Gastrocnemius medialis (tissue), 4 donors: ENCODE measurements at regions of chr3 and their contacts with region 1.

Region 1: GRCh38 chr3:9649791-9650521 is 651 bp downstream of the MTMR14 start:
- DNase-seq: no peak
- ATAC-seq: peak; percentile 3
- H3K4me3 ChIP-seq: peak overlapping the region; percentile 89 to 98 (median 93)
- H3K27ac ChIP-seq: peak overlapping the region; percentile 89 to 96 (median 96)
- H3K4me1 ChIP-seq: peaks cover 40 to 41% of the 10 kb centered on the region in 2 donors
- H3K27me3 ChIP-seq: no peaks in the 10 kb centered on the region
- CTCF ChIP-seq: no peak
- POLR2A ChIP-seq: no peak

Region 2: GRCh38 chr3:8963137-8963869 is 686.7 kb before region 1 on chr3 and contains the start of gene RAD18:
- in situ Hi-C with region 1: no loop called
- intact Hi-C with region 1: loop called (anchors 10 kb)
- DNase-seq: peak; percentile 63 to 86
- ATAC-seq: peak; percentile 98 to 99
- H3K4me3 ChIP-seq: peak within 1 kb of the TSS; percentile 82 to 89 (median 88)
- H3K27ac ChIP-seq: peak within 1 kb of the TSS; percentile 76 to 89 (median 81)
- H3K4me1 ChIP-seq: peaks cover 7 to 9% of the 10 kb centered on the region in 2 donors
- H3K27me3 ChIP-seq: no peaks in the 10 kb centered on the region
- CTCF ChIP-seq: no peak
- POLR2A ChIP-seq: no peak
- total RNA-seq, gene RAD18: 1.8 to 5.8 (median 2.3) TPM

Region 3: GRCh38 chr3:9362731-9363530 is 287.0 kb before region 1 on chr3 and contains the start of gene THUMPD3:
- in situ Hi-C with region 1: loop called in 3 of 4 experiments (anchors 25 kb)
- intact Hi-C with region 1: loop called (anchors 2 kb)
- DNase-seq: peak; percentile 81 to 86
- ATAC-seq: peak; percentile 95 to 97
- H3K4me3 ChIP-seq: peak within 1 kb of the TSS; percentile 70 to 96 (median 79)
- H3K27ac ChIP-seq: peak within 1 kb of the TSS; percentile 85 to 97 (median 89)
- H3K4me1 ChIP-seq: peaks cover 20 to 21% of the 10 kb centered on the region in 2 donors
- H3K27me3 ChIP-seq: no peaks in the 10 kb centered on the region
- CTCF ChIP-seq: peak in 1 of 5 experiments; percentile 24
- POLR2A ChIP-seq: peak; percentile 66 to 85
- total RNA-seq, gene THUMPD3: 22.2 to 39.8 (median 25.2) TPM

Region 4: DNA sequence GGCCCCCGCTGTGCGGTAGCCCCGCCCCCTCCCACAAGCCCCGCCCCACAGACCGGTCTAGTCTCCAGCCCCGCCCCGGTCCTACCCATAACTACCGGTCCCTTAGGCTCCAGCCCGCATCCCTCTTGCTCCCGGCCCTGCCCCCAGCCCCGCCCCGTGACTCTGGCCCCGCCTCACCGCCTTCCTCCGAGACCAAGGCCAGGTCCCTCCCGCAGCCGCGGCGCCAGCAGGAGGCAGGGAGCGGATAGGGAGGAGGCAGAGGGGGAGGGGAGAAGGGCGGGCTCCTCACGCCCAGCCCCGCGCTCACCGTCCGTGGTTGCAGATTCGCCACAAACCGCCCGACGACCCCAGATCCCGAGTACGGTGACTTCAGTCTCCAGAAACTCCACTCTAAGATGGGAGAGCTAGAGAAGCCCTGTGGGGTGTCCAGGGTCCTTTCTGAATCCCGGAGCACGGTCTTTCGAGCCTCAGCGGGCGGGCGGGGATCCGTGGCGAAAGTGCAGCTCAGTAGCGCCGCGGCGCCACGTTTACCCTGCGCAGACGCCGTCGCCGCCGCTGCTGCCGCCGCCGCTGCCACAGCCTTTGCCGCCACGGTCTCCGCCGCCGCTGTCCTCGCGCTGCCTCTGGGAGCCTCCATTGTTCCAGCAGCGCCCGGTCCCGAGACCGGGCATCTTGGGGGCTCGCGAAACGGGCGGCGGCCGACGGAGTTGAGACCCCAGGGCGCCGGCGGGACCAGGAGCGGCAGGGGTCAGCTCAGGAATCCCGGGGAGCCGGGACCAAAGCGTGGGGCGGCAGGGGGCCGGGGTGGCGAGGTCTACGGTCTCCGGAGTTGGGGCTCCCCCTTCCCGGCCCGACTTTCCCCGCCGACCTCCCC is 81.5 kb after region 1 on chr3 and contains the start of gene BRPF1:
- in situ Hi-C with region 1: no loop called
- intact Hi-C with region 1: loop called (anchors 1 kb)
- DNase-seq: peak; percentile 99 to 100
- ATAC-seq: peak; percentile 90 to 92
- H3K4me3 ChIP-seq: peak within 1 kb of the TSS; percentile 87 to 92 (median 90)
- H3K27ac ChIP-seq: peak within 1 kb of the TSS; percentile 90 to 99 (median 96)
- H3K4me1 ChIP-seq: peaks cover 16 to 21% of the 10 kb centered on the region in 2 donors
- H3K27me3 ChIP-seq: no peaks in the 10 kb centered on the region
- CTCF ChIP-seq: peak in 2 of 5 experiments; percentile 20 to 28
- POLR2A ChIP-seq: peak; percentile 27 to 58
- total RNA-seq, gene BRPF1: 12.0 to 19.5 (median 14.7) TPM

Region 5: DNA sequence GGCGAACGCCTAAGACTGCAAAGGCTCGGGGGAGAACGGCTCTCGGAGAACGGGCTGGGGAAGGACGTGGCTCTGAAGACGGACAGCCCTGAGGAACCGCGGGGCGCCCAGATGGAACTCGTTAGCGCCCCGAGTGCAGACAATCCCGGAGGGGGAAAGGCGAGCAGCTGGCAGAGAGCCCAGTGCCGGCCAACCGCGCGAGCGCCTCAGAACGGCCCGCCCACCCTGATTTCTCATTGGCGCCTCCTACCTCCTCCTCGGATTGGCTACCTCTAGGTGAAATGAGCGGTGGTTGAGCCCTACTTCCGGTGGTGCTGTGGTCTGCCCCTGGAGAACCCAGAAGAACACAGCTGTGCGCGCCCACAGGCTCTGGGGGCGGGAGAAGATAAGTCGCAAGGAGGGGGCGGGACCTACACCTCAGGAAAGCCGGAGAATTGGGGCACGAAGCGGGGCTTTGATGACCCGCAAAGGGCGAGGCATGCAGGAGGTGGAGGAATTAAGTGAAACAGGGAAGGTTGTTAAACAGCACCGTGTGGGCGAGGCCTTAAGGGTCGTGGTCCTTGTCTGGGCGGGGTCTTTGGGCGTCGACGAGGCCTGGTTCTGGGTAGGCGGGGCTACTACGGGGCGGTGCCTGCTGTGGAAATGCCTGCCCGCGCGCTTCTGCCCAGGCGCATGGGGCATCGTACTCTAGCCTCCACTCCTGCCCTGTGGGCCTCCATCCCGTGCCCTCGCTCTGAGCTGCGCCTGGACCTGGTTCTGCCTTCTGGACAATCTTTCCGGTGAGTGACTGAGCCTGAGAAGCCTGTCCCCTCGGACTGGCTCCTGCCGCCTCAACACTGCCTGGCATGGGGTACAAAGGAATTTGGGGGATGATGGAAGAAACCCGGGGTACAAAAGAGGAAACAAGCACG is 99.9 kb after region 1 on chr3 and contains the start of gene OGG1:
- in situ Hi-C with region 1: no loop called
- intact Hi-C with region 1: loop called (anchors 2 kb)
- DNase-seq: peak; percentile 98
- ATAC-seq: peak; percentile 98
- H3K4me3 ChIP-seq: peak within 1 kb of the TSS; percentile 77 to 95 (median 84)
- H3K27ac ChIP-seq: peak within 1 kb of the TSS; percentile 88 to 99 (median 97)
- H3K4me1 ChIP-seq: peaks cover 19 to 23% of the 10 kb centered on the region in 2 donors
- H3K27me3 ChIP-seq: no peaks in the 10 kb centered on the region
- CTCF ChIP-seq: no peak
- POLR2A ChIP-seq: peak; percentile 56 to 74
- total RNA-seq, gene OGG1: 4.1 to 13.3 (median 7.4) TPM

Region 6: DNA sequence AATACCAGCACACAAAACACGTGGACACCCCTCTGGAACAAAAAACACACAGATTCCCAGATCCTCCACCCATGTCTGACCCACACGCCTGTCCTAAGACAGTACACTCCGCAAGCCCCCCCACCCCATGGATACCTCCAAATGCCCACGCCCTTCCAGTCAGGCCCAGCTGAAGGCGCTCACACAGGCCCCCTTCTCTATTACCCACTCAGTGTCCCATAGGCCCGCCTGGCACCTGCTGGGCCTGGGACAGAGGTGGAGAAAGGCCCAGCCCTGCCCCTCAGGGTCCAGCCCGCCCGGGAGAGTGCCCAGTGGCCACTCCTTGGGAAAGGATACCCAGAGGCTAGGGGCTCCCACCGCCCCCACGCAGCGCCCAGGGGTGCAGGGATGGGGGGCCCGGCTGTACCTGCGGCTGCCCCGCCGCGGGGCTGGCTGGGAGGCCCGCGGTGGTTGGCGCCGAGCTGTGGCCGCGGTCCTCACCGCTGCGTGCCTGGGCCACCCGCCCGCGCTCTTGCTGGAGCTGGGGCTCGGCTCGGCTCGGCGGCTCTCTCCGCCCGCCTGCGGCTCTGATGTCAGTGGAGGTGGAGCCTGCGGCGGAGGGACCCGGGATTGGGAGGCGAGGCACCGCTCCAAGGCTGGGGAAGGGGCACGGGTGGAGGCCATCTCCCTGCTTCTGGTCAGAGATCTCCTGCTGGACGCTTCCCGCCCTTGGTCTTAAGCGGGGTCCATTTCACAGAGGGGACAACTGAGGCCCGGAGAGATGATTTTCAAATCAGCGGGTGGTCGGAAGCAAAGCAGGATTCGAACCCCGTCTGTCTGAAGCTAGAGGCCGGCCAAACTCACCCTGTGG is 119.7 kb after region 1 on chr3 and contains the start of gene CAMK1:
- in situ Hi-C with region 1: no loop called
- intact Hi-C with region 1: no loop called
- DNase-seq: peak; percentile 50 to 53
- ATAC-seq: peak; percentile 68 to 77
- H3K4me3 ChIP-seq: peak within 1 kb of the TSS; percentile 60 to 64 (median 62)
- H3K27ac ChIP-seq: peak within 1 kb of the TSS; percentile 64 to 80 (median 78)
- H3K4me1 ChIP-seq: peaks cover 9 to 11% of the 10 kb centered on the region in 2 donors
- H3K27me3 ChIP-seq: no peaks in the 10 kb centered on the region
- CTCF ChIP-seq: no peak
- POLR2A ChIP-seq: peak; percentile 52 to 61
- total RNA-seq, gene CAMK1: 2.1 to 11.6 (median 8.0) TPM

Region 7: DNA sequence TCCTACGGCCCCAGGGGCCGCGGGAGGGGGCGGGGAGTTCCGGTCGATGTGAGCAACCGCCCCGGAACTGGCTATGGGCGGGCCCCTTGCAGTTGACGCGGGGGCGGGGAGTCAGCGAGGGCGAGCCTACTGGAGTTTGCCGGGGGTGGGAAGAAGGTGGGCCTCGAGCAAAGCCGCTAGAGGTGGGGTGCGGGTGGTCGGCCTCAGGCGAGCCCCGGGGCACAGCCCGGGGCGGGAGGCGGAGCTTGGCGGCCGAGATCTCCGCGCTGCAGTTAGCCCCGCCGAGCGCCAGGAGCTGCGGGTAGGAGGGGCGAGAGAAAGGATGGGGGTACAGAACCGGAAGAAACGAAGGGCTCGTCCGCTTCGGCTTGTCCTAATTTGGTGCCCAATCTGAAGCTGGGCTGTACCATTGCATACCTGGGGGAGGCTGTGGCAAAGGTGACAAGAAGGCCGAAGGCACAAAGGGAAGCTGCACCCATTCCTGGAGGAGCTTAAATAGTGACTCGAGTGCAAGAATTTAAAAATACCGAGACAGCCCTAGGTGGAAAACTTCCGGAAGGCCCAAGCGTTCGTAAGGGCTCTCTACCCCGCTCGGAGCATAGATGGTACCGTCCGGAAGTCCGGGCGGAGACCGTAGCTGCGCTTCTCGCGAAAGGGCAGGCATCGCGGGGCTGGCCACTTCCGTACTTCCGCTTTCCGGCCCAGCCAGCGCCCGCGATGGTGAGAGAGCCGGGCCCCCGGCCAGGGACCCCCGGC is 142.6 kb after region 1 on chr3 and contains the starts of genes ARPC4 and TADA3:
- in situ Hi-C with region 1: no loop called
- intact Hi-C with region 1: loop called (anchors 2 kb)
- DNase-seq: peak; percentile 87 to 88
- ATAC-seq: peak; percentile 97
- H3K4me3 ChIP-seq: peak within 1 kb of the TSS; percentile 89 to 99 (median 94)
- H3K27ac ChIP-seq: peak within 1 kb of the TSS; percentile 93 to 99 (median 98)
- H3K4me1 ChIP-seq: peaks cover 20 to 27% of the 10 kb centered on the region in 2 donors
- H3K27me3 ChIP-seq: no peaks in the 10 kb centered on the region
- CTCF ChIP-seq: peak in 2 of 5 experiments; percentile 20 to 40
- POLR2A ChIP-seq: peak; percentile 63 to 83
- total RNA-seq, gene ARPC4: 96.8 to 147 (median 143) TPM
- total RNA-seq, gene TADA3: 58.1 to 83.5 (median 66.7) TPM